Psoas muscle (tissue), 8 donors: ENCODE measurements at regions of chr22 and their contacts with region 1.

Region 1: DNA sequence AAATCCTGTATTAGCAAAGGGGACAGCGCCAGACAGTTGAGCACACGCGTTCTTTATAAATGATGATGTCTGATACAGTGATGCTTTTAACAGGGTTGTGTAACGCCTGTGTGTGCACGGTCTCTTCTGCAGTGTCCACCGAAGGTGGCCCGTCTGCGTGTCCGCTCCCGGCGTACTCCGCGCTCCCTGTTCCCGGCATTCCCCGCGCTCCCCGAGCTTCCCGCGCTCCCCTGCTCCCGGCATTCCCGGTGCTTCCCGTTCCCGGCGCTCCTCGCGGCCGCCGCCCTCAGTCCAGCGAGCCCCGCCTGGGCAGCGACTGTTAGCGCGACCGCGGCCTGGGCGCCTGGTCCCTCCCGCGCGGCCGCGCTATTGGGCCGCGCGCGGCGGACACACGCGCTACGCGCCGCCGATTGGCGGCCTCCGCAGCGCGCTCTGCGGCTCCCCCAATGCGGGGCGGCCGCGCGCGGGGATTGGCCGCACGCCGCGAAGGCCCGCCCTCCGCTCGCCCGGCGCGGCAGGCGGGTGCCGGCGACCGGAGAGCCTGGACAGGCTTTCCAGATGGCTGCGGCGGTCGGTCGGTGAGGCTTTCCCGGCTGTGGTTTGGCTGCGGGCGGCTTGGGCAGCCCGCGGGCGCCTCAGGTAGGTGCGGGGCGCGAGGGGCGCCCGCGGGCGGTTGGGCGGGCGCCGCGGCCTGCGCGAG is at the start of gene DGCR8:
- DNase-seq: peak; percentile 94 to 97
- ATAC-seq: peak; percentile 92 to 95 (median 93)
- H3K4me3 ChIP-seq: peak within 1 kb of the TSS; percentile 98
- H3K27ac ChIP-seq: peak within 1 kb of the TSS; percentile 88
- H3K4me1 ChIP-seq: peaks cover 40% of the 10 kb centered on the region
- H3K27me3 ChIP-seq: no peaks in the 10 kb centered on the region
- CTCF ChIP-seq: no peak
- total RNA-seq, gene DGCR8: 12.2 to 19.5 (median 15.0) TPM

Region 2: DNA sequence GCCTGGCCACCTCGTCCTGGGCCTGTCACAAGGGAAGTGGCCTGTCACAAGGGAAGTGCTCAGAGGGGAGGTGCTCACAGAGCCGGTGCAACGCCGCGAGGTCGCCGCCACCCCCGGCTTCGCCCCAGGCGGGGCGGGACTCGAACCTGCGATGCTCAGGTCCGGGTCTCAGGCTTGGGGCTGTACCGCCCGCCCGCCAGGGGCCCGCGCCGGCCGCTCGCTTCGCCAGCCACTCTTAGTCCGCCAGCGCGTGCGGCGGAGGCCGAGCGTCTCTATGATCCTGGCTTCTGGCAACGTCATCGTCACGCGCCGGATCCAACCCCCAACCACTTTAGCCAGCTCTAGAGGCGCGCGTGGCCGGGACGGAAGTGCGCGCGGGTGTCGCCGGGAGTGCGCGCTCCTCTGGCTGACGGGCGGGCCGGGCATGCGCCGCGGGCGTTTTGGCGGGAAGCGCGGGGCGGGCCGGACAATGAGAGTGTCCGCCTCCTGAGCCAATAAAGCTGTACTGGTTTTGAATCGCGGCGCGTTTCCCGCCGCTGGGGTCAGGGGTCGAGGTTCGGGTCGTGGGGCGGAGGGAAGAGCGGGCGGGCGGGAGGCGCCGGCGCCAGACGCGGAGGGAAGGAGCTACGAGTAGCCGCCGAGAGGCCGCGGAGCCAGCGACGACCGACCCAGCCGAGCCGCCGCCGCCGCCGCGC is 37.2 kb after region 1 on chr22 and contains the start of gene TRMT2A:
- intact Hi-C with region 1: loop called in 1 of 2 experiments (anchors 5 kb)
- DNase-seq: peak; percentile 99
- ATAC-seq: peak; percentile 91 to 93 (median 92)
- H3K4me3 ChIP-seq: peak within 1 kb of the TSS; percentile 92
- H3K27ac ChIP-seq: peak within 1 kb of the TSS; percentile 86
- H3K4me1 ChIP-seq: peaks cover 30% of the 10 kb centered on the region
- H3K27me3 ChIP-seq: no peaks in the 10 kb centered on the region
- CTCF ChIP-seq: no peak
- total RNA-seq, gene TRMT2A: 20.5 to 34.1 (median 24.9) TPM

Region 3: DNA sequence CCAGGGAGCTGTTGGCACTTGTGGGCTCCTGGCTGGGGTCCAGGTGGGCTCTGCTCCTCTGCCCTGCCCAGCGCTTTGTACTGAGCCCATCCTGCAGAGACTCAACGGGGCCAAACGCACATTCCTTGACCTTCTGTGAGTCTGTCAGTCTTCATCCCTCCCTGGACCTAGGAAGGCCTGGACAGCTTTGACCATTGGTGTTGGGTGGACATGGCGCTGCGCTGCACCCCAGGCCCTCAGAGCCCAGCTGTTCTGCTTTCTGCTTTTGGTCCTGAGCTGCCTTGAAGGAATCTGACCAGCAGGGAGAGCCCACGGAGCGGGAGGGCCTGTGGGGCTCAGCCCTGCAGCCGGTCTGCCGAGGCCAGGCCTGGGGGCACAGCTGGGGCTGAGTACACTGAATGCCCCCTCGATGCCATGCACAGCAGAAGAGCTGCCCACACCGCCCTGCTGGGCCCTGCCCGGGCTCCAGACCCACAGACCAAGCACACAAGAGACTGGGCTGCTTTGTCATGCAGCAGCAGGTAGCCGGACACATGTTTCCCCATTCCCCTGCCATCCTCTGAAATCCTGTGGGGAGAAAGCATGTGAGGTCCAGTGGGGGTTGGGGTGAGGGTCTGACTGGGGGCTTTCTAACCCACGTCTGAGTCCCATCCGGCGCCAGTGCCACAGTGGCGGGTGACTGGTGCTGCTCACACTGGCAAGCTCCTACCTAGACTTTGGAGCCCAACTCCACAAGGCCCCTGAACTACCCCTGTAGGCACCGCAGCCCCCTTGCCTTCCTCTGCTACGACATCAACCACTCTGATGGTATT is 95.1 kb after region 1 on chr22:
- intact Hi-C with region 1: no loop called
- DNase-seq: no peak
- ATAC-seq: no peak
- H3K4me3 ChIP-seq: no peak overlapping the region
- H3K27ac ChIP-seq: no peak overlapping the region
- H3K4me1 ChIP-seq: no peaks in the 10 kb centered on the region
- H3K27me3 ChIP-seq: no peaks in the 10 kb centered on the region
- CTCF ChIP-seq: no peak